Activated CD8-positive, alpha-beta T cell treated with anti-CD3 and anti-CD28 coated beads for 36 hours (primary cell): ENCODE measurements at regions of chr4 and their contacts with region 1.

Region 1: DNA sequence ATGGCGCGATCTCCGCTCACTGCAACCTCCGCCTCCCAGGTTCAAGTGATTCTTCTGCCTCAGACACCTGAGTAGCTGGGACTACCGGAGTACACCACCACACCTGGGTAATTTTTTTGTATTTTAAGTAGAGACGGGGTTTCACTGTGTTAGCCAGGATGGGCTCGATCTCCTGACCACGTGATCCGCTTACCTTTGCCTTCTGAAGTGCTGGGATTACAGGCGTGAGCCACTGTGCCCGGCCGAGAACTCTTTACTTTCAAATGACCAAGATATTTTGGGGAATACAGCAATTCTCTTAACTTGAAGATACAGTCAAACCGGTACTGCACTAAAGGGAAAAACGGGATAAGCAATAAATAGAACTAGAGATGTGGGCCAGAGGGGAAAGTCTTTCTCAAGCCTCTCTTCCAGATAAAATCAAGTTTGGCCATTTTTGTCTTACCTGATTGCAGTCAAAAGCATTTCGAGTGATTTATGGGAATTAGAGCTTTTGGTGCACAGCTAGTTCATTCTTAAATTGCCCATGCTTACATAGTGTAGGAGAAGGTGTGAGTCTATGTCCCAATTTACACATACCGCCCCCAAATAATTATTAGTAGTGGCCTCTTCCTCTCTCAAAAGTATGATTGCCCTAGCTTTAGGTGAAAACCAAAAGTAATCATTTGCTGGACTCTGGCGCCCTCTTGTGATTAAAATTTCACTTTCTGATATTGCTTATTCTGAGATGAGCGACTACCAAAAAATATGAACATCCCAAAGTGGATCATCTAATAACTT is 53.2 kb upstream of the ABCG2 start:
- DNase-seq: peak; percentile 57
- ATAC-seq: no peak
- H3K4me3 Mint-ChIP-seq: no peak overlapping the region
- H3K27ac Mint-ChIP-seq: no peak overlapping the region
- H3K4me1 Mint-ChIP-seq: no peaks in the 10 kb centered on the region
- H3K27me3 Mint-ChIP-seq: no peaks in the 10 kb centered on the region
- CTCF ChIP-seq: peak; percentile 86

Region 2: GRCh38 chr4:87679449-87680169 is 532.1 kb before region 1 on chr4:
- CTCF ChIA-PET with region 1: interaction called, 4 read pairs
- POLR2A ChIA-PET with region 1: no interaction called
- intact Hi-C with region 1: loop called (anchors 5 kb)
- DNase-seq: peak; percentile 47
- ATAC-seq: no peak
- H3K4me3 Mint-ChIP-seq: no peak overlapping the region
- H3K27ac Mint-ChIP-seq: no peak overlapping the region
- H3K4me1 Mint-ChIP-seq: no peaks in the 10 kb centered on the region
- H3K27me3 Mint-ChIP-seq: no peaks in the 10 kb centered on the region
- CTCF ChIP-seq: peak; percentile 82

Region 3: GRCh38 chr4:87895964-87896621 is 315.6 kb before region 1 on chr4:
- CTCF ChIA-PET with region 1: no interaction called
- POLR2A ChIA-PET with region 1: no interaction called
- intact Hi-C with region 1: no loop called
- DNase-seq: peak; percentile 45
- ATAC-seq: peak; percentile 85
- H3K4me3 Mint-ChIP-seq: no peak overlapping the region
- H3K27ac Mint-ChIP-seq: no peak overlapping the region
- H3K4me1 Mint-ChIP-seq: peaks cover 11% of the 10 kb centered on the region
- H3K27me3 Mint-ChIP-seq: peaks cover 15% of the 10 kb centered on the region
- CTCF ChIP-seq: no peak

Region 4: DNA sequence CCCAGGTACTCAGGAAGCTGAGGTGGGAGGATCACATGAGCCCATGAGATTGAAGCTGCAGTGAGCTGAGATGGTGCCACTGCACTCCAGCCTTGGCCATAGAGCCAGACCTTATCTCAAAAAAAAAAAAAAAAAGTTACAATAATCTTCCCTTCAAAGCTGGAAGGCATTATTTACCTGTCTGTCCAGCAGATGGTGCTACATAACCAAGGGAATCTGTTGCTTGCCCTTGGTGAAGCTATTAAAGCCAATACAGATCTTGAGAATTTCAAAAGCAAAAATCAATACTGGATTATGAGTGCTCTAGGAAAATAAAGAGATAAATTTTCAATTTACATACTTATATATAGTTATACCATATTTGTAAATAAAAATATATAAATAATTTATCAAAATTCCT is 178.4 kb before region 1 on chr4:
- CTCF ChIA-PET with region 1: interaction called, 128 read pairs
- POLR2A ChIA-PET with region 1: no interaction called
- intact Hi-C with region 1: loop called (anchors 1 kb)
- DNase-seq: peak; percentile 51
- ATAC-seq: peak; percentile 53
- H3K4me3 Mint-ChIP-seq: no peak overlapping the region
- H3K27ac Mint-ChIP-seq: no peak overlapping the region
- H3K4me1 Mint-ChIP-seq: peaks cover 2% of the 10 kb centered on the region
- H3K27me3 Mint-ChIP-seq: no peaks in the 10 kb centered on the region
- CTCF ChIP-seq: peak; percentile 59

Region 5: GRCh38 chr4:88054901-88055300 is 156.8 kb before region 1 on chr4:
- CTCF ChIA-PET with region 1: interaction called, 11 read pairs
- POLR2A ChIA-PET with region 1: no interaction called
- intact Hi-C with region 1: no loop called
- DNase-seq: peak; percentile 14
- ATAC-seq: no peak
- H3K4me3 Mint-ChIP-seq: no peak overlapping the region
- H3K27ac Mint-ChIP-seq: no peak overlapping the region
- H3K4me1 Mint-ChIP-seq: no peaks in the 10 kb centered on the region
- H3K27me3 Mint-ChIP-seq: no peaks in the 10 kb centered on the region
- CTCF ChIP-seq: no peak

Region 6: DNA sequence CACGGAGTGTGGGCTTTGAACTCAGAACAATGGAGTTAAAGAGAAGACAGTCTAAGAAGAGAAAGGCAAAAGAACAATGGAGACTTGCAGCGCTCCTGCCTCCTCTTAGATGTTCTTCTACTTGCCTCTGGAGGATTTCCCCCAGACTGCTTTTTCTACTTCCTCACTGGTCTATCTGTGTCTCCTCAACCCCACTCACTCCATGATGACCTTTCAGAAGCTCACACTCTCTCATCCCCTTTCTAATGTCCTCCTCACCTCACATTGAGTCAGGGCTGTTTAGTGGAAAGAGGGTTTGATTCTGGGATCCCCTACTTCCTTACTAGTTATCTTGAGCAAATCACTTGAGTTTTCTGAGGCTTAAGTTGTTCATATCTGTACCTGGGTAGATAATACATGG is 154.8 kb after region 1 on chr4:
- CTCF ChIA-PET with region 1: no interaction called
- POLR2A ChIA-PET with region 1: no interaction called
- intact Hi-C with region 1: loop called (anchors 10 kb)
- DNase-seq: no peak
- ATAC-seq: peak; percentile 93
- H3K4me3 Mint-ChIP-seq: no peak overlapping the region
- H3K27ac Mint-ChIP-seq: no peak overlapping the region
- H3K4me1 Mint-ChIP-seq: peaks cover 5% of the 10 kb centered on the region
- H3K27me3 Mint-ChIP-seq: no peaks in the 10 kb centered on the region
- CTCF ChIP-seq: no peak